Activated T-helper 2 cell treated with anti-CD3 and anti-CD28 coated beads, Interferon-gamma antibody, Interleukin-2, Interleukin-4, amounts not matched to agents 10 μg/mL and 5 μg/mL and 100 μg/mL, durations not matched to agents 14 hours and 24 hours and 36 hours (primary cell): ENCODE measurements at regions of chr3 and their contacts with region 1.

Region 1: GRCh38 chr3:44338010-44338827 is at the start of gene TCAIM:
- DNase-seq: peak; percentile 98
- H3K4me3 Mint-ChIP-seq: peak within 1 kb of the TSS; percentile 96
- H3K27ac Mint-ChIP-seq: peak within 1 kb of the TSS; percentile 99
- H3K4me1 Mint-ChIP-seq: peaks cover 20% of the 10 kb centered on the region
- H3K27me3 Mint-ChIP-seq: peaks cover 14% of the 10 kb centered on the region
- total RNA-seq, gene TCAIM: 17.5 and 18.4 TPM in 2 replicates

Region 2: GRCh38 chr3:44363591-44363990 is 25.4 kb after region 1 on chr3:
- intact Hi-C with region 1: no loop called
- DNase-seq: no peak
- H3K4me3 Mint-ChIP-seq: no peak overlapping the region
- H3K27ac Mint-ChIP-seq: no peak overlapping the region
- H3K4me1 Mint-ChIP-seq: no peaks in the 10 kb centered on the region
- H3K27me3 Mint-ChIP-seq: no peaks in the 10 kb centered on the region

Region 3: GRCh38 chr3:44439499-44440295 is 101.5 kb after region 1 on chr3:
- intact Hi-C with region 1: loop called (anchors 1 kb)
- DNase-seq: peak; percentile 71
- H3K4me3 Mint-ChIP-seq: peak overlapping the region; percentile 57
- H3K27ac Mint-ChIP-seq: peak overlapping the region; percentile 90
- H3K4me1 Mint-ChIP-seq: peaks cover 44% of the 10 kb centered on the region
- H3K27me3 Mint-ChIP-seq: no peaks in the 10 kb centered on the region

Region 4: DNA sequence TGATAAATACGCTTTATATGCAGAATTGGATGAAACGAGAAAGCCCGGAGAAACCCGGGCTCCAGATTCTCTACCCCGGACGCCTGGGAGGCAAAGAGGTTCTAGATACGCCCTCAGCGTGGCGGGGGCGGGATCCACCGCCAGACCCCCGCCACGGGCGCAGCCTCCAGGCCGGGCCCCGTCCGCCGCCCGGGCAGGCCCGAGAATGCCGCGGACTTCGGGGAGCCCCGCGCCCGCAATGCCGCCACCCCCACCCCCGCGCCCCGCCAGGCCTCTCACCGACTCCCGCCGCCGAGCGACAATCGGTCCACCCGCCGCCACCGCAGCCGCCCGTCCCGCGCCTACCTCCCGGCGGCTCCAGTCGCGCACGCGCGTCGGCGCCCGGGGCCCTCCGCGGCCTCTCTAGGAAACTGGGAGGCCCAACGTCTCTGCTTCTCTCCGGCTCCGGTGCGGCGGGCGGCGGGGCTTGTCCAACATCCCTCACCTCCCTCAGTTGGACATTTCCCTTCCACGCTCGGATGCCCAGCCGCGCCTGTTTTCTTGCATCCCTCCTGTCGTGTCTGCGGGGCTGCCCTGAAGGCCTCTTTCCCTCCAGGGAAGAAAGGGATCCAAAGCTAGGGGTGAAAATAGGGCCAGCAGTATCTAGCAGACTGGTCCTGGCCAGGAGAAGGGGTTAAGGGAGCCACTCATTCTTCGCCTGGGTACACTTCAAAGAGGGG is 139.3 kb after region 1 on chr3 and contains the start of gene ZNF445:
- intact Hi-C with region 1: loop called (anchors 1 kb)
- DNase-seq: peak; percentile 76
- H3K4me3 Mint-ChIP-seq: peak within 1 kb of the TSS; percentile 91
- H3K27ac Mint-ChIP-seq: peak within 1 kb of the TSS; percentile 82
- H3K4me1 Mint-ChIP-seq: peaks cover 27% of the 10 kb centered on the region
- H3K27me3 Mint-ChIP-seq: no peaks in the 10 kb centered on the region
- total RNA-seq, gene ZNF445: 22.6 and 24.0 TPM in 2 replicates

Region 5: DNA sequence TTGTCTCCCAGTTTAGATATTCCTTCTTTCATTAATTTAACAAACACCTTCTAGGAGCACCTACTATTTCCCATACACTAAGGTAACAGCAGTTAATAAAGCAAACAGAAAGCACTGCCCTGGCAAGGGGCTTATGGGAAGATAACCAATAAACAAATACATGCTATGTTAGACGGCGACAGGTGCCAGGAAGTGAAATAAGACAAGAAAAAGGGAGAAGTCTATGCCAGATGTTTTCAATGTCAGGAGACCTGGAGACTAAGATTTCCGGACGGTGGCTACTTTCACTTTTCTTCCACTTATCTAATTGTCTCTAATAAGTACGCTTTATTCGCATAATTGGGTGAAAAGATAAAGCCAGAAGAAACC is 171.8 kb after region 1 on chr3:
- intact Hi-C with region 1: loop called (anchors 1 kb)
- DNase-seq: no peak
- H3K4me3 Mint-ChIP-seq: peak overlapping the region; percentile 93
- H3K27ac Mint-ChIP-seq: peak overlapping the region; percentile 84
- H3K4me1 Mint-ChIP-seq: peaks cover 19% of the 10 kb centered on the region
- H3K27me3 Mint-ChIP-seq: no peaks in the 10 kb centered on the region

Region 6: DNA sequence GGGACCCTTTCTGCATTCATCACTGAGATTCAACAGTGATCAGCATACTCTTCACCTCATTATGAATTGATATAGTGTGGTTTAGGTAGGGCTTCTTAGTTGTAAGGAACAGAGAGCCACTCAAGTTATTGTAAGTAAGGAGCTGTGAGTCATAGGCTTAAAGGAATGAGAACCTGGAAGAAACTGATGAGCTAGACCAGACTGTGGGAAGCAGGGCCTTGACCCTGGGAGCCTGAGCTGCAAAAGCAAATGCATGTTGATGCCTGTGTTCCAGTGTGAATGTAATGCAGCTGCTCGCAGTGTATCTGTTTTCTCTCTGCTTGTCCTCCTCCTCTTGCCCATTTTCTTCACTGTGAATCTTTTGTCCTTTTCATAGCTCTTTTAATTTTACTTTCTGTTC is 230.3 kb after region 1 on chr3:
- intact Hi-C with region 1: no loop called
- DNase-seq: no peak
- H3K4me3 Mint-ChIP-seq: no peak overlapping the region
- H3K27ac Mint-ChIP-seq: no peak overlapping the region
- H3K4me1 Mint-ChIP-seq: no peaks in the 10 kb centered on the region
- H3K27me3 Mint-ChIP-seq: no peaks in the 10 kb centered on the region

Region 7: DNA sequence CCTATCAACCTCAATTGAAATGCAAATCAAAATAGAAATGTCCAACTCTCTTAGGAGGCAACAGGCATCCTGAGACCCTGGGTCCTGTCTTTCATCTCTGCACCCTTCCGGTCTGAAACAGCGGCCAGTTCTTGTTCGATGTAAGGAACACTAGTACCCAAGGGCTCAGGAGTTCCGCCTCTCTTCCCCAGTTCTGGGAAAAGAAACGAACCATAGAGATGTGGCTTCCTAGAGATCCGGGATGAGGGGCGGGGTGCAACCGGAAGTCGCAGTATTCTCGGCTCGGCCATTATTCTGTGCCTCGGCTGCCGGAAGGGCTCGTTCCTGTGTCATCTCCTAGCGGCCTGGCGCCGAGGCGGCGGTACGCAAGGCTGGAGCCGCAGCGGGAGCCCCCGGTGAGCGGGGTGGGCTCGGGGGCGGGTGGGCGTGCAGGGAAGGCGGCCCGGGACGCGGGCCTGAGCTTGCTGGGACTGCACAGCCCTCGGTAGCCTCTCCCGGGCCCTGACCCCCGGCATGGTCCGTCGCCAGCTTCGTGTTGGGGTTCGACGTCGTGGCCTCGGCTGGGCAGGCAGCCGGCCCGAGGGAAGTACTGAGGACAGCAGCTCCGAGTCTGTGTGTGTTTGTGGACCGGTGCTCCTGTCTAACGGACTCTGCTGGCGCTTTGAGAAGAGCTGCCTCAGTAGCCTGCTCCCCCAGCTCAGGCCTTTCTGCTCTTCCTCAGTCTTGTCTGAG is 286.7 kb after region 1 on chr3 and contains the start of gene ZNF197:
- intact Hi-C with region 1: loop called (anchors 10 kb)
- DNase-seq: peak; percentile 53
- H3K4me3 Mint-ChIP-seq: peak within 1 kb of the TSS; percentile 88
- H3K27ac Mint-ChIP-seq: peak within 1 kb of the TSS; percentile 69
- H3K4me1 Mint-ChIP-seq: peaks cover 17% of the 10 kb centered on the region
- H3K27me3 Mint-ChIP-seq: no peaks in the 10 kb centered on the region
- total RNA-seq, gene ZNF197: 10.4 and 10.7 TPM in 2 replicates

Region 8: DNA sequence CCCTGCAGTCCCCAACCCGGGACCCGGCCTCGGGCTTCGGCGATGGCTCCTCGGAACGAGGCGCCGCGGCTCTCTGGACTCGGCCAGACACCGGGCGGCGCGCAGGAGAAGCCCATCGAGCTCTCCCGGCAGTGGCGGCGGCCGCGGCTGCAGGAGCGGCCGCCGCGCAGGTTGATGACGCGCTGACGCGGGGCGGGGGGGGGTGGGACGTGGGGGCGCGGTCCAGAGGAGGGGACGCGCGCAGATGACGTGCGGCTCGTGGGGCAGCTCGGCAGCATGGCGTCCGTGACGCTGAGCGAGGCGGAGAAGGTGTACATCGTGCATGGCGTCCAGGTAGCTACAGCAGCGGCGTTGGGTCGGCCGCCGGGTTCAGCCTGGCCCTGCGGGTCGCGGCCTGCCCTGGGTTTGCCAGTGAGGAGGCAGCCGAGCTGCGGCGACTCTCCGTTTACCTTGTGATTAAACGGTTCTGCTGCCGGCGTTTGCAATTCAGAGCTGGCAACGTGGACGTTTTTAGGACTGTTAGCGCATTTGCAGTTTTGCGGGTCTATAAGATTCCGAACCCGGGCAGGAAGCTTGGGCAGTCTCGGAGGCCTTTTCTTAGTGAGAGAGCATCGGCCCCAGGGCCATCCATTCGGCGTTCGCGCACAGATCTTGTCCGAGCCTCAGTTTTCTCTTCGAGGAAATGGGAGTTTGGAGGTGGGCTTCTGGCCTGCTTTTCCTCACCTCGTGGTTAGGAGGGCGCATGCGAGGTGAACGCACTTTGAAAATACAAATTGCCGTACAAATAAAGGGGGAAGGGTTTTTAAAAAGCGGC is 638.0 kb after region 1 on chr3 and contains the starts of genes EXOSC7 and ZDHHC3:
- intact Hi-C with region 1: loop called (anchors 5 kb)
- DNase-seq: peak; percentile 81
- H3K4me3 Mint-ChIP-seq: peak within 1 kb of the TSS; percentile 94
- H3K27ac Mint-ChIP-seq: peak within 1 kb of the TSS; percentile 89
- H3K4me1 Mint-ChIP-seq: peaks cover 48% of the 10 kb centered on the region
- H3K27me3 Mint-ChIP-seq: no peaks in the 10 kb centered on the region
- total RNA-seq, gene EXOSC7: 83.0 and 86.5 TPM in 2 replicates
- total RNA-seq, gene ZDHHC3: 38.0 and 40.3 TPM in 2 replicates